Activated CD4-positive, alpha-beta T cell treated with anti-CD3 and anti-CD28 coated beads, Interleukin-2, amount 10 ng/mL, durations not matched to agents 7 days and 5 days (primary cell): ENCODE measurements at regions of chr7 and their contacts with region 1.

Region 1: DNA sequence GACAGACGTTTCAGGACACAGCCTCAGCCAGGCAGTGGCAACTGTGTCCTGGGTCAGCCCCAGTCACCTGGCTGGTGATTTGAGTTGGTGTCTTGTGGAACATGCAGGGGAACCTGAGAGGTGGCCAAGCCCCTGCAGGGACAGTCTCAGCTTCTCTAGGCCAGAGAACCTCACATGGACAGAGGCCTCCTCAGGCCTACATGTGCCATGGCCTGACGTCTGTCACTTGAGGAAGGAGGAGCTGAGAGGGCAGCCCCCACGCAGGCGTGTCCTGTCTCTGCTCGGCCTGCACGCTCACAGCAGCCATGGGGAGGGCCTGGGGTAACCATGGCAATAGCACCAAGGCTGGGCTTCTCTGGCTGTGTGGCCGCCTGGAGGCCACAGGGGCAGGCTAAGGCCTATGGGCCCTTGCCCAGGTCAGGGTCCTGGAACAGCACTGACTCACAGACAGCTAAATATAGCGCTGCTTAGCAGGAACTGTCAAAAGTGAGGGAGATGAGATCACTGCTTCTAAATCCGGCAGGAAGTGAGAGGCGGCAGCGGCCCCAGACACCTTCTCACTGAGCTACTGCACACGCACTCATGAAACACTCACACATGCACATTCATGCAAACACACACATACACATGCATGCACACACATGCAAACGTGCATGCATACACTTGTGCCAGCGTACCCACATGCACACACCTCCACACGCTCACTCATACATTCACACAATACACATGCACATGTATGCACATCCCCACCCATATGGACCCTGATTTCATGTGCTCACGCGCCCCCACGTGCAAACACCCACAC is 57.0 kb downstream of the YKT6 start:
- DNase-seq: peak; percentile 75
- H3K4me3 Mint-ChIP-seq: no peak overlapping the region
- H3K27ac Mint-ChIP-seq: peak overlapping the region; percentile 94
- H3K4me1 Mint-ChIP-seq: peaks cover 25% of the 10 kb centered on the region
- H3K27me3 Mint-ChIP-seq: no peaks in the 10 kb centered on the region

Region 2: GRCh38 chr7:44240983-44241510 is 16.8 kb before region 1 on chr7:
- CTCF ChIA-PET with region 1: interaction called, 11 read pairs
- POLR2A ChIA-PET with region 1: no interaction called
- DNase-seq: peak; percentile 73
- H3K4me3 Mint-ChIP-seq: no peak overlapping the region
- H3K27ac Mint-ChIP-seq: peak overlapping the region; percentile 81
- H3K4me1 Mint-ChIP-seq: peaks cover 5% of the 10 kb centered on the region
- H3K27me3 Mint-ChIP-seq: no peaks in the 10 kb centered on the region